Dendritic cell treated with granulocyte-macrophage colony-stimulating factor and Interleukin-4, amounts not matched to agents 40 ng/mL and 50 ng/mL, for 4 days (primary cell): ENCODE measurements at regions of chr11 and their contacts with region 1.

Region 1: DNA sequence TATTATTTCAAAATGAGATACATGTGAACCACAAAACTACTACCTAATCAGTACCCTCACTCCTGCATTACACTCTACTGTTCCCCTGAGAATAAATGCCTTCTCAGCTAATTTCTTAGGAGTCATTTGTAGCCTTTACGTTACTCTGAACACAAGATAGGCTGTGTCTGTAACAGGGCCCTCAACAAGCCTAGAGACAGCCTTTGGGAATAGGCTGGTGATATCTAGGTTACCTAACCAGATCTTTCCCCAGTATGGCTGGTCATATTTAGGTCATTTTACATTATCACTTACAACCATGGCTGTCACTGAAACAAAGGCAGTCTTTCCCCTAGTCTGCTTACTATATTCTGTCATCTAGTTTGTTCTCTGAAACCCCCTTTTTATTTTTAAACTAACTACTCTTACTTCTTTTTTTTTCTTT is 14.2 kb downstream of the ATM start:
- H3K4me3 Mint-ChIP-seq: no peak overlapping the region
- H3K27ac Mint-ChIP-seq: peak overlapping the region; percentile 71
- H3K4me1 Mint-ChIP-seq: peaks cover 20% of the 10 kb centered on the region
- H3K27me3 Mint-ChIP-seq: no peaks in the 10 kb centered on the region

Region 2: DNA sequence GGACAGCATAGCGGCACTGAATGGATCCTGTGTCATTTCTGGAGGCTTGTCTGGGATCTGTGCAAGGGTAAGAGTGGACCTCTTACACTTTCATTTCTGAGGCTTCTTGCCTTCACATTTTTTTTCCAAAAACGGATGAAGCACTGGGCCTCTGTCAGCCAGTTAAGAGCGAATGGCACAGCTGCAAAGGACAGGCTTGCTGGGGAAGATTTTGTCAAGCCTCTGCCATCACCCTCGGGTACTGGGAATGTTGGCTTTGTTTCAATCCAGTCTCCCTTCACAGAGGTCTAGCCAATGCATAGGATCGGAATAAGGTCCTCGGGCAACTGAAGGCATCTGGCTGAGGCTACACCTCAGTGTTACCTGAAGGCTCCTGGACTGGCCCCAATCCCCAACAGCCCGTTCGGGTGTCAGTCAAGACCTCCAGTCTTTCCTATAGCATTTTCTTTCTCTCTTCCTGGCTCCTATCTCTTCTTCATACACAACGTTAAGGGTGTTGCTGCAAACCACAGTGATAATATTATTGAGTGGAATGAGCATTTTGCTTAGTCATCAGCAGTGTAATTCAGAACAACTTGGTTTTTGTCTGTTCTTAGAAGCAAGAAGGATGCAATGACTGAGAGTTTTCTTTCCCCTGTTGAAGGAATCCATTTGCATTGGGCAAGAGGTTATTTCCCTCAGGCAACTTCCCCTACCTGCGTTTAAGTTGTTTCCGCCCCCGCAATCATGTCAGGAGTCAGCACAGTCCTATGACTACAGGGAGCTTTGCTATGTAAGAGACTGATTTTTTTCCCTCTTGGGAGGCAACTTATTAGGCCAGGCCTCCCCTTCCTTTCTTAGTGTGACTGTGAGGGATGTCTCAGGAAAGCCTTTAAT is 37.4 kb before region 1 on chr11:
- intact Hi-C with region 1: loop called (anchors 5 kb)
- H3K4me3 Mint-ChIP-seq: no peak overlapping the region
- H3K27ac Mint-ChIP-seq: peak overlapping the region; percentile 73
- H3K4me1 Mint-ChIP-seq: peaks cover 43% of the 10 kb centered on the region
- H3K27me3 Mint-ChIP-seq: no peaks in the 10 kb centered on the region

Region 3: DNA sequence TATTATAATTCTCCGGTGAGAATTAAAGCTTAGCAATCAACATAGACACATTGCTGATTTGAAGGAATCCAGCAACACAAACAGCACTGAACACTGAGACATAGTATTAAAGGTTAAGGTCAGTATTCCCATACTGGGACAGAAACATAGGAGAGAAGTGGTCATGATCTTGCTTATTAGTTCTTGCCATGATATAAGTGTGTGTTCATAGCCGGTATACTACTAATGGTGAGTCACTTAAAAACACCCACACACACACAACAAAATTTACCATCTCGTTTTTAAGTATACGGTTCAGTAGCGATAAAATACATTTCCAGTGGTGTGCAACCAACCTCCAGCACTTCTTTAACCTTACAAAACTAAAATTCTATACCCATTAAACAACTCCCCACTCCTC is 133.9 kb after region 1 on chr11:
- intact Hi-C with region 1: no loop called
- H3K4me3 Mint-ChIP-seq: no peak overlapping the region
- H3K27ac Mint-ChIP-seq: no peak overlapping the region
- H3K4me1 Mint-ChIP-seq: no peaks in the 10 kb centered on the region
- H3K27me3 Mint-ChIP-seq: no peaks in the 10 kb centered on the region